Activated T-helper 1 cell treated with anti-CD3 and anti-CD28 coated beads, Interleukin-12 subunit alpha, Interleukin-12 subunit beta, Interleukin-2, Interleukin-4 antibody, amounts not matched to agents 30 ng/mL and 10 ng/mL and 1 ng/mL, durations not matched to agents 14 hours and 24 hours and 36 hours (primary cell): ENCODE measurements at regions of chr10 and their contacts with region 1.

Region 1: DNA sequence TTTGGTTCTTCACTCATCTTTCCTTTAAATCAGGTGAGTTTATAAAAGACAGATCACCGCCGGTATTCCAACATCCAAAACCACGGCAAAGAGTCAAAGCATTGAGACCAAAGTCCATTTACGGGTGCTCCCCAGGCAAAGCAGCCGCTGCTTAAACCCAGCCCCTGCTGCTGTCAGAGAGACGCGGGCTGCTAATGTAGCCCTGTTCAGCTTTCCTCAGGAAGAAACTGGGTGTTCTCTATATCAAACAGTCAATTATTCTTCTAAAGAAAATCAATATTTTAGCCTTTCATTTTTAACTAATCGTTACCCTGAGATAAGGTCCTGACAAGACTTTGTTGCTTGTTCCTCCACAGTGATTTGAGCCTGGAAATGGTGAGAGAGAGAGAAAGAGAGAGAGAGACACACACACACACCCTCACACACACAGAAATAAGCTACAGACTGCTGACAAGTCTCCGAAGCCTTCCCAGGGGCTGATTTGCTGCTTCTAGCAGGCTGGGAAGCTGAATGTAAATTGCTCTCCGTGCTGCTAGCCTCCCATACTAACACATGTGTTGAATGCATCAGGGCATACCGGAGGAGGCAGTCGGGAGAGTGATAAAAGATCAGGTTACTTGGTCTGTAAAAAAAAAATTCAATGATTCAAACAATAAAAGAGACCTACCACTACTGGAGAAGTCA is 183.0 kb upstream of the ANK3 start:
- DNase-seq: peak; percentile 21
- H3K4me3 Mint-ChIP-seq: peak overlapping the region; percentile 92
- H3K27ac Mint-ChIP-seq: peak overlapping the region; percentile 87
- H3K4me1 Mint-ChIP-seq: peaks cover 68% of the 10 kb centered on the region
- H3K27me3 Mint-ChIP-seq: no peaks in the 10 kb centered on the region

Region 2: DNA sequence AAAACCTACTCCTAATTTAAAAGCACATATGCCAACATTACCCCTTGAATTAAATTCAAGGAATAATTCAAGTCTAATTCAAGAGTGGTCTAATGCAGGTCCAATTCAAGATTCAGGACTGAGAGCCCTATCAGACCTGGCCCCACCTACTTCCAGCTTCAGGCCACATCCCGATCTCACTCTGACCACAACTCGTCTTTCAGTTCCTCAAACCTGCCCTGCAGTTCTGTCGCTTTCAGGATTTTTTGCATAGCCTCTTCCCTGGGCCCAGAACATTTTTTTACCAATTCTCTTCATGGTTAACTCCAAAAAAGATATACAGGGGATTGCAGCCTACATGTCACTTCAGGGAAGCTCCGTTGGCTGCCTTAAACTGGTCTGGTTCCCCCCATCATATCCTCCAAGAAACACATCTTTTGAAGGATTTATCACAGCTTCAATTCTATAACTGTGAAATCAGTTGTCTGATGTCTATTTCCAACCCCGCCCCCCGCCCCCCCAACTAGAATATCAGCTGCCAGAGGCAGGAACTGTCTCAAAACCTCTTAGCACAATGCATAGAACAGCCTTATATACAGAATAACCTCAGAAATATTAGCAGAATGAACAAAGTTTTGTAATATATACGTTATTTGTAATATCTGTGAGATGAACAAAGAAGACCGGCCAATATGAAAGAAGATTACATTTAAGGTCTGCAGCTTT is 687.1 kb before region 1 on chr10:
- intact Hi-C with region 1: loop called (anchors 2 kb)
- DNase-seq: no peak
- H3K4me3 Mint-ChIP-seq: peak overlapping the region; percentile 63
- H3K27ac Mint-ChIP-seq: peak overlapping the region; percentile 94
- H3K4me1 Mint-ChIP-seq: peaks cover 88% of the 10 kb centered on the region
- H3K27me3 Mint-ChIP-seq: no peaks in the 10 kb centered on the region

Region 3: DNA sequence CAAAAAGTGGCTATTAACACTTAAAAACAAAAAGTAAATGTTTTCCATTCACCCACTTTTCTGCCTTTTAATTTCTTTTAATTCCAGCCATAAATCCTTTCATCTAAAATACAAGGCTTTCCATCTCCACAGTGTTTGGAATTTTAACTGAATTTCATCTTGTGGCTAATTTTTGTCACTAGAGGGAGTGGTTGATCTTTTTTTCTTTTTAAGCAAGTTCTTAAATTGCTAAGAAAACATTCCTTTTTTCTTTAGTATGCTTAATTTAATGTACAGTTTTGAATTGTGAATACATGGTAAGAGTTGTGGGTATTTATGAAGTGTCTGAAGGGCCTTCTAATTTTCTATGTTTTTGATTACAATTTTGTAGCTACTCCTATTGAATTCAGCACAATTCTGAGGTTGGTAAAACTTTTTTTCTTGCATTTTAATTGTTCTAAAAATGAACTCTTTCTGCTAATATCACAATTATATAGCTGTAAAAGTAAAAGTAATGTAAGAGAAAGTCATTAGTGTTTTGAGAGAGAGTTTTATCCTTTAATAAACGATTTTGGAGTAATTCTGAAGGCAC is 128.1 kb before region 1 on chr10:
- intact Hi-C with region 1: loop called (anchors 1 kb)
- DNase-seq: no peak
- H3K4me3 Mint-ChIP-seq: no peak overlapping the region
- H3K27ac Mint-ChIP-seq: no peak overlapping the region
- H3K4me1 Mint-ChIP-seq: peaks cover 16% of the 10 kb centered on the region
- H3K27me3 Mint-ChIP-seq: peaks cover 2% of the 10 kb centered on the region

Region 4: DNA sequence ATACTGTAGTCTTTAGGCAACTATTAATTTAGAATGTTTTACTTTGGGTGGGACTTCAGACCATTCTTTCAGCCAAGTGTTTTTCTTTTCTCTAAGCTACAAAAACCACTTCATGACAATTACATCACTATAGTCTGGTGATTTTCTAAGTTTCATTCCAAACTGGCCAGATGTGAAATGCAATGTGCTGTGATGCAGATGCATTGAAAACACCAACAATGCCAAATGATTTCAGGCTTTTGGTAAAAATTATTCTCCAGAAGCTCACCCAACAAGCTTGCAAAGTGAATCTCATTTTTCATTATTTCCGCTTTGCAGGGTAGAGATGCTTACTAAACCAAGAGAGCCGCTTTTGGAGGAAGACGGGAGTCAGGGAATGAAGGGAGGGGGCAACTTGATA is 64.6 kb before region 1 on chr10:
- intact Hi-C with region 1: no loop called
- DNase-seq: no peak
- H3K4me3 Mint-ChIP-seq: no peak overlapping the region
- H3K27ac Mint-ChIP-seq: no peak overlapping the region
- H3K4me1 Mint-ChIP-seq: peaks cover 12% of the 10 kb centered on the region
- H3K27me3 Mint-ChIP-seq: no peaks in the 10 kb centered on the region

Region 5: GRCh38 chr10:60611291-60611747 is 38.7 kb after region 1 on chr10:
- intact Hi-C with region 1: loop called (anchors 1 kb)
- DNase-seq: no peak
- H3K4me3 Mint-ChIP-seq: peak overlapping the region; percentile 1
- H3K27ac Mint-ChIP-seq: peak overlapping the region; percentile 49
- H3K4me1 Mint-ChIP-seq: peaks cover 30% of the 10 kb centered on the region
- H3K27me3 Mint-ChIP-seq: no peaks in the 10 kb centered on the region

Region 6: GRCh38 chr10:60769406-60769805 is 196.8 kb after region 1 on chr10:
- intact Hi-C with region 1: loop called (anchors 2 kb)
- DNase-seq: no peak
- H3K4me3 Mint-ChIP-seq: no peak overlapping the region
- H3K27ac Mint-ChIP-seq: no peak overlapping the region
- H3K4me1 Mint-ChIP-seq: peaks cover 20% of the 10 kb centered on the region
- H3K27me3 Mint-ChIP-seq: peaks cover 2% of the 10 kb centered on the region